ENCODE measurements at regions of chr1 and their contacts with region 1.

Region 1: DNA sequence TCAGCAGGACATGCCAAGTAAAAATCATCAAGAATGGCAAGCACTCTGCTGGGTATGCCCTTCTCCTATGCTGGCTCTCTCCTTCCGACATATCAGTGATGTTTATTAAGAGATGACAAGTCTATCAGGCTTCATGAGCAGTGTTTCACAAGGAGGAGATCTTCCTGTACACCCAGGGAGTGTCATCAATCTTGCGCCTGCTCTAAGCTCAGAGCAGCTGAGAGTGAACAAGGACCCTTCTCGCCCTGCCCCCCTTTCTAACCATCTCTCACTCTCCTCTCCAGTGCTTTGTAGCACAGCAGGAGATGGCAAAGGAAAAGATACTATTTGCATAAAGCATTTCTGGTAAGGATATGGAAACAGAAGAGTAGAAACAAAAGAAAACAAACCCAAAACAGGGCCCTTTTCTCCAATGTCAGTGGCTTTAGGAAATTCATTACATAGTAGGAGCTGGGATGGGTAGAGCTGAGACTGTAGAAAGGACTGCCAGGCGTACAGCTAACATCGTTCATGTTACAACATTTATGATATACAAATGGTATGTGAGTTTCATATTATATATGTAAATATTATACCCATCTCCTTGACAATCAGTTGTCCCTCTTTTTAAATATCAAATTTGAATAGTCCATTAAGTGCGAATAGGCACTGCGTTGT is 201.7 kb downstream of the NUF2 start:
- DNase-seq: no peak
- H3K4me3 Mint-ChIP-seq: no peak overlapping the region
- H3K27ac Mint-ChIP-seq: no peak overlapping the region
- H3K4me1 Mint-ChIP-seq: no peaks in the 10 kb centered on the region
- H3K27me3 Mint-ChIP-seq: no peaks in the 10 kb centered on the region
- CTCF ChIP-seq: no peak

Region 2: GRCh38 chr1:163130225-163130856 is 393.2 kb before region 1 on chr1:
- CTCF ChIA-PET with region 1: no interaction called
- POLR2A ChIA-PET with region 1: no interaction called
- intact Hi-C with region 1: no loop called
- DNase-seq: no peak
- H3K4me3 Mint-ChIP-seq: no peak overlapping the region
- H3K27ac Mint-ChIP-seq: no peak overlapping the region
- H3K4me1 Mint-ChIP-seq: no peaks in the 10 kb centered on the region
- H3K27me3 Mint-ChIP-seq: peaks cover 17% of the 10 kb centered on the region
- CTCF ChIP-seq: no peak

Region 3: DNA sequence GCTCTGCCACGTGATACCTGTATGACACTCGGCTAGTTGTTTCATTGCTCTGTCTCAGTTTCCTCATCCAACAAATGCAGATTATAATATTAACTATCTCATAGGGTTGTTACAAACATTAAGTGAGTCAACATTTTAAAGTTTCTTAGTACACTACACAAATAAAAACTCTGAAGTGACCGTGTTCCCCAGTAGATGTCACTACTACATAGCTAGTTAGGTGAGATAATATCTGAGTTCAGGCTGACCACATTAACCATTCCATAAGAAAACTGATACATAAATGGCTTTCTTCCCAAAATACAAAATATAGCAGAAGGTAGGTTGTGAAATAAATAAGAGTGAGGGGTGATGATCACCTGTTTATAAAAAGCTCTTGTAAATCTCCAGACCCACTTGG is 12.3 kb after region 1 on chr1:
- CTCF ChIA-PET with region 1: interaction called, 70 read pairs
- POLR2A ChIA-PET with region 1: no interaction called
- intact Hi-C with region 1: no loop called
- DNase-seq: peak; percentile 60
- H3K4me3 Mint-ChIP-seq: no peak overlapping the region
- H3K27ac Mint-ChIP-seq: no peak overlapping the region
- H3K4me1 Mint-ChIP-seq: no peaks in the 10 kb centered on the region
- H3K27me3 Mint-ChIP-seq: peaks cover under 1% of the 10 kb centered on the region
- CTCF ChIP-seq: peak; percentile 47

Measured in MCF 10A (cell line).